PC-9 (cell line): ENCODE measurements at regions of chr19 and their contacts with region 1.

Region 1: GRCh38 chr19:7799640-7800355 is 30.2 kb upstream of the EVI5L start:
- DNase-seq: peak; percentile 61 to 65
- H3K4me3 ChIP-seq: peak overlapping the region; percentile 51
- H3K27ac ChIP-seq: no peak overlapping the region
- H3K4me1 ChIP-seq: peaks cover 6% of the 10 kb centered on the region; the same call in 1 of the 2 replicates
- H3K27me3 ChIP-seq: no peaks in the 10 kb centered on the region
- CTCF ChIP-seq: peak; percentile 87

Region 2: GRCh38 chr19:7349961-7350711 is 449.7 kb before region 1 on chr19:
- CTCF ChIA-PET with region 1: no interaction called
- POLR2A ChIA-PET with region 1: no interaction called
- intact Hi-C with region 1: loop called (anchors 10 kb)
- DNase-seq: no peak
- H3K4me3 ChIP-seq: no peak overlapping the region
- H3K27ac ChIP-seq: no peak overlapping the region
- H3K4me1 ChIP-seq: no peaks in the 10 kb centered on the region; the same call in 1 of the 2 replicates
- H3K27me3 ChIP-seq: no peaks in the 10 kb centered on the region
- CTCF ChIP-seq: no peak

Region 3: DNA sequence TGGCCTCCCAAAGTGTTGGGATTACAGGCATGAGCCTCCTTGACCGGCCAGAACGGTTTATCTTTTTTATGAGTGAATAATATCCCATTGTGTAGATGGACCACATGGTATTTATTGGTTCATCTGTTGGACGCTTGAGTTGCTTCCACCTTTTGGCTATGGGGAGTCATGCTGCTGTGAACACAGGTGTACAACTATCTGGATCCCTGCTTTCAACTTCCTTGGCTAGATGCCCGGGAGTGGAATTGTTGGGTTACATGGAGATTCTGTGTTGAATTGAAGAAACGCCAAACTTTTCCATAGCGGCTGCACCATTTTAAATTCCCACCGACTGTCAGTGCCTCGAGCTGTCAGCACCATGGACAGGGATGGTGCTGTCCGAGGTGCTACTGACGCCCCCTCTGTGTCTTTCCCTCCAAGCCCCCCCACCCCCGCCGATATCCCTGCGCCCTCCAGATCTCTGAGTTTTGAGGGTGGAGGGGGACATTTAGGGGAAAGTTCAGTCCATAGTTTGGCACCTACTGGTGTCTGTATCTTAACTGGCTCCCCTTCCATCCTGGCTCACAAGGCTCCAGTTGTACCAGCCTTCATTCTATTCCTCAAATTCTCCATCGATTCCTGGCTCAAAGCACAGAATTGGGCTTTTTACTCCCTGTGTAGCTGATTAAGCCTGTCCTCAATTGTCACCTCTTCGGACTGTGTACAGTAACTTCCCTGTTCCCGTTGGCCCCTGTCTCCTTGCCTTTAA is 237.0 kb before region 1 on chr19:
- CTCF ChIA-PET with region 1: interaction called, 20 read pairs
- POLR2A ChIA-PET with region 1: no interaction called
- intact Hi-C with region 1: loop called (anchors 1 kb)
- DNase-seq: no peak
- H3K4me3 ChIP-seq: no peak overlapping the region
- H3K27ac ChIP-seq: no peak overlapping the region
- H3K4me1 ChIP-seq: no peaks in the 10 kb centered on the region
- H3K27me3 ChIP-seq: no peaks in the 10 kb centered on the region
- CTCF ChIP-seq: no peak

Region 4: GRCh38 chr19:7645163-7645562 is 154.6 kb before region 1 on chr19:
- CTCF ChIA-PET with region 1: no interaction called
- POLR2A ChIA-PET with region 1: no interaction called
- intact Hi-C with region 1: no loop called
- DNase-seq: no peak
- H3K4me3 ChIP-seq: no peak overlapping the region
- H3K27ac ChIP-seq: no peak overlapping the region
- H3K4me1 ChIP-seq: no peaks in the 10 kb centered on the region
- H3K27me3 ChIP-seq: no peaks in the 10 kb centered on the region
- CTCF ChIP-seq: no peak

Region 5: GRCh38 chr19:7657131-7657751 is 142.6 kb before region 1 on chr19:
- CTCF ChIA-PET with region 1: interaction called, 10 read pairs
- POLR2A ChIA-PET with region 1: no interaction called
- intact Hi-C with region 1: loop called (anchors 1 kb)
- DNase-seq: peak in 1 of 2 experiments; percentile 61
- H3K4me3 ChIP-seq: no peak overlapping the region
- H3K27ac ChIP-seq: no peak overlapping the region
- H3K4me1 ChIP-seq: peaks cover 25% of the 10 kb centered on the region
- H3K27me3 ChIP-seq: peaks cover 17% of the 10 kb centered on the region
- CTCF ChIP-seq: no peak

Region 6: GRCh38 chr19:7748770-7749209 is 51.0 kb before region 1 on chr19:
- CTCF ChIA-PET with region 1: no interaction called
- POLR2A ChIA-PET with region 1: no interaction called
- intact Hi-C with region 1: loop called (anchors 5 kb)
- DNase-seq: peak; percentile 30 to 81
- H3K4me3 ChIP-seq: no peak overlapping the region
- H3K27ac ChIP-seq: no peak overlapping the region
- H3K4me1 ChIP-seq: 0 out of 2 replicates have a peak, but pooled peaks cover 5% of the 10 kb centered on the region
- H3K27me3 ChIP-seq: peaks cover 11% of the 10 kb centered on the region; the same call in 1 of the 2 replicates
- CTCF ChIP-seq: peak; percentile 64

Region 7: DNA sequence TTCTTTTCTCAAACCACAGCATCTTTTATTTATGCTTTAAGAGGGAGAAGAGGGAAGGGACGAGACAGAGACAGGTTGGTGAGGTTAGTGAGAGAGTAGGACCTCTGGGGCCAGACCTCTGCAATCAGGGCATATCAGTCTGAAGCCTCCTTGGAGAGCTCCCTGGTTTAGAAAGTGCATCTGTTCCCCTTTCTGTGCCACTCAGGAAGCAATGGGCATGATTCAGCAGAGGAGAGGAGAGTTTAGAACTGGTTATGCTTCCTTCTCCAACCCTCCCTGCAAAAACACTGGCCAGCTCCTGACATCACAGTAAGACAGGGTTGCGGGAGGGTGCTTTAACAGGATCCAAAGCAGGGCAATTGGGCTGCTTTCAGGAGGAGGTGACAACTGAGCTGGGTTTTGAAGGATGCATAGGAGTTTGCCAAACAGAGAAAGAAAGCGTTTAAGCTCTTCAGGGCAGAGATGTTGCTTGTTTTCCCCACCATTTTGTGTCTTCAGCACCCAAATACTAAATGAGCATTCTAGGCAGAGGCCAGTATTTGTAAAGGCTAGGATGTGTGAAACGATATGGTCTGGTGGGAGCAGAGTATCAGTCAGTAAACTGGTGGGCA is 442.5 kb after region 1 on chr19:
- CTCF ChIA-PET with region 1: interaction called, 15 read pairs
- POLR2A ChIA-PET with region 1: no interaction called
- intact Hi-C with region 1: no loop called
- DNase-seq: no peak
- H3K4me3 ChIP-seq: no peak overlapping the region
- H3K27ac ChIP-seq: no peak overlapping the region
- H3K4me1 ChIP-seq: peaks cover 13% of the 10 kb centered on the region
- H3K27me3 ChIP-seq: no peaks in the 10 kb centered on the region
- CTCF ChIP-seq: no peak